CD14-positive monocyte (primary cell): ENCODE measurements at regions of chr15 and their contacts with region 1.

Region 1: GRCh38 chr15:74373731-74374647 is 6.5 kb upstream of the CYP11A1 start:
- DNase-seq: peak; percentile 80 to 87 (median 83)
- H3K4me3 ChIP-seq: peak overlapping the region; percentile 46 to 82 (median 63)
- H3K4me3 Mint-ChIP-seq: peak overlapping the region; percentile 75 to 88
- H3K27ac ChIP-seq: no peak overlapping the region
- H3K27ac Mint-ChIP-seq: no peak overlapping the region
- H3K4me1 ChIP-seq: peaks cover 14 to 19% of the 10 kb centered on the region in 2 donors
- H3K4me1 Mint-ChIP-seq: peaks cover 20% of the 10 kb centered on the region
- H3K27me3 ChIP-seq: peaks cover 3 to 21% of the 10 kb centered on the region in 2 donors
- H3K27me3 Mint-ChIP-seq: peaks cover 23 to 51% (median 26%) of the 10 kb centered on the region in 3 donors
- CTCF ChIP-seq: peak; percentile 97

Region 2: DNA sequence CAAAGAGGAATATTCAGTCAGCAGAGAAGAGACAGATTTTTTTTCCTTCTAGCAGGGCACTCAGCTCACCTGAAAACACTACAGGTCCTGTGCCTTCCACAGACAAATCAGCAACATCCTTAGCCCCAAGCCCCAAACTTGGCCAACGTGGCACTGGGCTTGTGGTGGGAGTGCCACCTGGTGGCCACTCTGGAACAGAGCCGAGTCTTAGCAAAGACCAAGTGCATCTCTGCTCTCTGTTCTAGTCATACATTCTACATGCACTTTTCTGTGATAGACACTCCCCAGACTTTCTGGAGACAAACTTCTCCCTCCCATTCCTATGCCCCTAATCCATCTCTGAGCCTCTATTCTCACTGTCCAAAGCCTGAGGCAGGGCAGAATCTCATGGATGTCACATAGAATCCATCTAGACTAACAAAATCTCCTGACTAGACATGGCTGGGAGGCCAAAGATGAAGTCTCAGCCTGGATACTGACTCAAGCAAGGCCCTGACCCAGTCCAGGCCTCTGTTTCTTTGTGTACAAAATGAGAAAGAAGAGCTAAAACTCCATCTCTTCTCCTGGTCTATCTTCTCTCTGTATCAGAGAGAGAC is 64.8 kb after region 1 on chr15:
- intact Hi-C with region 1: loop called (anchors 2 kb)
- DNase-seq: peak; percentile 53 to 69 (median 65)
- H3K4me3 ChIP-seq: no peak overlapping the region
- H3K4me3 Mint-ChIP-seq: no peak overlapping the region
- H3K27ac ChIP-seq: no peak overlapping the region
- H3K27ac Mint-ChIP-seq: no peak overlapping the region
- H3K4me1 ChIP-seq: peaks cover 7 to 9% of the 10 kb centered on the region in 2 donors
- H3K4me1 Mint-ChIP-seq: peaks cover 10% of the 10 kb centered on the region
- H3K27me3 ChIP-seq: no peaks in the 10 kb centered on the region
- H3K27me3 Mint-ChIP-seq: peaks cover 2 to 15% (median 8%) of the 10 kb centered on the region in 3 donors
- CTCF ChIP-seq: peak; percentile 85

Region 3: DNA sequence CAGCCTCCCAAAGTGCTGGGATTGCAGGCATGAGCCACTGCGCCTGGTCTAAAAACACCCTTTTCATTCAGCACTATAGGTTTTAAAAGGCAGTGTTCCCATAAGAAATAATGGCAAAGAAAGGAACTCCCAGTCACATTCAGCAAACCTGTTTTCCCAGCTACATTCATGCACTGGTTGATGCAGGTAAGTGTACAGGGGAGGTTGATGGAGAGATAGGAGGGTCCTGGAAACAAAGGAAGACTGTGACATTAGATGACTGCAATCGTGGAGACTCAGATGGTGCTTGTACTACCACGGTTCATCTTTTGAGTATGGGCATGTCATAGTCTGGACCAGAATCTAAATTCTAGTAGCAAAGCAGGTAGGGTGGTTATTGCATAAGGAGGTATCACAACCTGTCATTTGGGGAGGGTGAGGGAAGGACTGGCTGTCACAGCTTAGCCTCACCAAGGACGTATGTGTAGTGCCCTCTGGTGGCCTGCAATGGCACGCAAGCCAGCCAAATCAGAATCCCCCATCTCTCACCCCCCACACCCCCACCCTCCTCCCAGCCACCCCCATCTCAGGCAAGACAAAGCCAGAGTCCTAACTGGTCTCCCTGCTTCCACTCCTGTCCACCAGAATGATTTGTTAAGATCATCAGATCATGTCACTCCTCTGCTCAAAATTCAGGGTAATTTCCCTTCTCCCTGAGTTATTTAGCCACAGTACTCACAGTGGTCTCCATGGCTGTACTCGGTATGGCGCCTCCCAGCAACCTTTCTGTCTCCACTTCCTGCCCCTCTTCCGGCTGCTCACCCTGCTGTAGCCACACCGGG is 115.7 kb after region 1 on chr15:
- intact Hi-C with region 1: loop called in 1 of 2 experiments (anchors 5 kb)
- DNase-seq: peak; percentile 37 to 61 (median 47)
- H3K4me3 ChIP-seq: no peak overlapping the region
- H3K4me3 Mint-ChIP-seq: no peak overlapping the region
- H3K27ac ChIP-seq: no peak overlapping the region
- H3K27ac Mint-ChIP-seq: peak overlapping the region in 3 of 7 donors; percentile 15 to 70 (median 47)
- H3K4me1 ChIP-seq: no peaks in the 10 kb centered on the region
- H3K4me1 Mint-ChIP-seq: peaks cover 8% of the 10 kb centered on the region
- H3K27me3 ChIP-seq: no peaks in the 10 kb centered on the region
- H3K27me3 Mint-ChIP-seq: no peaks in the 10 kb centered on the region
- CTCF ChIP-seq: peak; percentile 76

Region 4: DNA sequence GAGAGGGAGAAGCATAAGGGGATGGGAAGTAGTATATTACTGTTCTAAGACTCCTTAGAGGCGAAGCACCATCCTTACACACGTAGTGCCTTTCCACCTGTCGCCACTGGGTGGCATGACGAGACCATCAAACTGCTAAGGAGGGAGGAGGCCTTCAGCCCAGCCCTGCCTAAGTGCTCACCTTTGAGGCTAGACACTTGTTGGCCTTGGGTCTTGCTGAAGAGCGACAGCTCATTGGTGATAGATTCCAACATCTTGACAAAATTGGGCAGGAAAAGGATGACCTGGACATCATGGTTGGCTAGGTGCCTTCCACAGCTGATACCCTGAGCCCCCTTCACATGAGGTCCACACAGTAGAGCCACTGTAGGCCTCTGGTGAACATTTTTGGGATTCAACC is 261.2 kb after region 1 on chr15:
- intact Hi-C with region 1: loop called (anchors 5 kb)
- DNase-seq: peak; percentile 59 to 71 (median 69)
- H3K4me3 ChIP-seq: no peak overlapping the region
- H3K4me3 Mint-ChIP-seq: no peak overlapping the region
- H3K27ac ChIP-seq: no peak overlapping the region
- H3K27ac Mint-ChIP-seq: no peak overlapping the region
- H3K4me1 ChIP-seq: no peaks in the 10 kb centered on the region
- H3K4me1 Mint-ChIP-seq: no peaks in the 10 kb centered on the region
- H3K27me3 ChIP-seq: no peaks in the 10 kb centered on the region
- H3K27me3 Mint-ChIP-seq: peaks cover 0 to 2% (median 0%) of the 10 kb centered on the region in 3 donors
- CTCF ChIP-seq: peak; percentile 97